ENCODE measurements at regions of chr5 and their contacts with region 1.

Region 1: DNA sequence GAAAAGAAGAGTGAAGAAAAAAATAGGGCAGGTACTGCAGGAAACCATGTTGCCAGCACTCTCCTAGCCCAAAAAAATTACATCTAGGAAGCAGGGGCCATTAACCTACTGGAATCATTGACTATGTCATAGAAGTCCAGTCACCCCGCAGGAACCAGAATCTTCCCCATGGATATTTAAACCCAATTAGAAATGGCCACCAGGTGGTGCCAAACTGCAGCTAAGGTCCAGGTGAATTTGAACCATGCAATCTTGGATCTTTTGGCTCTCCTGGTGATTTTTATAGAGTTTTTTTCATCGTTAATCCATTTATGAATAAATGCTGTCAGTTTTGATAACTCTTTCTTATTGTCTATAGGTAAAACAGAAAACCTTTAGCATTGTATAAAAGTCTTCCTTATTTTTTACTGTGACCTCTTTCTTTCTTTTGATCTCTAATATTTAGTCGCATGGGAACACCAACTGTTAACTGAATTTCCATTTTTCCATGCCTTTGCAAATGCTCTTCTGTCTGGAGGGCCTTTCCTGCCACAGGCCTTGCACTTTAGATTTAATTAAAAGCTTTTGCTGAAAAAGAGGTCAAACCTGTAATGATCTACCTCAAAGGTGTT is 147.5 kb upstream of the FGF10 start:
- DNase-seq: peak; percentile 31
- H3K4me3 ChIP-seq: no peak overlapping the region
- H3K27ac ChIP-seq: no peak overlapping the region
- H3K4me1 ChIP-seq: no peaks in the 10 kb centered on the region
- CTCF ChIP-seq: peak; percentile 90

Region 2: DNA sequence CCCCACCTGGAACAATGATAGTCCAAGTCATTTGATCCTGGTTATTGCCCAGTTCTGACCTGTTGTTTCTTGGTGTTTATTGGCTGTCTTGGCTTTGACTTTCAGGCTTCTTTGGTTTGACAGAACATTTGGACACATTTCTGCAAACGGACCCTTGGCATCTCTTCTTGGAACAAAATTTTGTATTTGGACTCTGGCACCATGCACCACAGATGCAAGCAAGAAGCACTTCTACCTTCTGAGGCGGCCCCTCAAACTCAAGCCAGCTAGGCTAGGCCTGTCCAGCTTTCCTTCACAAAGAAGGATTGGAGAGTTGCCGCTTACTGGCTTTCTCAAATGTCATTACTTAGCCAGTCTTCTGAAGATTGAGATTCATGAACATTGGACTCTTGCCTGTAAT is 124.5 kb before region 1 on chr5:
- CTCF ChIA-PET with region 1: no interaction called
- POLR2A ChIA-PET with region 1: no interaction called
- intact Hi-C with region 1: no loop called
- DNase-seq: no peak
- H3K4me3 ChIP-seq: no peak overlapping the region
- H3K27ac ChIP-seq: no peak overlapping the region
- H3K4me1 ChIP-seq: no peaks in the 10 kb centered on the region
- CTCF ChIP-seq: no peak

Region 3: DNA sequence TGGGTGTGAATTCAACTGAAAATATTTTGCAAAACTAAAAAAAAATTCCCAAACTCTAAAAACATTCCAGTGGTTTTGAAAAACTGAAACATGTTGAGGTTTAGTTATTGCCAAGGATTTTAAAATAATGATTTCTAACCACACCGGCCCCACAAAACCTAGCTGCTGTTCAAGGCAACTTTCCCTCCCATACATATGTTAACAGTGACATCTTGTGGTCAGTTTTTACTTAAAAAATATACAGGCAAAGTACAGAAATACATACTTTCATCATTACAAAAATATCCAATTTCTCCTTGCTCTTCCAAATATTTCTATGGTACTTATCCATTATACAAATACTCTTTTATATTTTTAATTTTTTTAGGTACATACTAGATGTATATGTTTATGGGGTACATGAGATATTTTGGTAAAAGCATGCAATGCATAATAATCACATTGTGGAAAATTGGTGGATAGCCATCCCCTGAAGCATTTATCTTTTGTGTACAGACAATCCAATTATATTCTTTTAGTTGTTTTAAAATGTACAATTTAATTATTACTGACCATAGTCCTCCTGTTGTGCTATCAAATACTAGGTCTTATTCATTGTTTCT is 237.6 kb after region 1 on chr5:
- CTCF ChIA-PET with region 1: no interaction called
- POLR2A ChIA-PET with region 1: no interaction called
- intact Hi-C with region 1: loop called (anchors 2 kb)
- DNase-seq: peak; percentile 42
- H3K4me3 ChIP-seq: no peak overlapping the region
- H3K27ac ChIP-seq: no peak overlapping the region
- H3K4me1 ChIP-seq: no peaks in the 10 kb centered on the region
- CTCF ChIP-seq: peak; percentile 83